ENCODE measurements at regions of chr22 and their contacts with region 1.

Region 1: DNA sequence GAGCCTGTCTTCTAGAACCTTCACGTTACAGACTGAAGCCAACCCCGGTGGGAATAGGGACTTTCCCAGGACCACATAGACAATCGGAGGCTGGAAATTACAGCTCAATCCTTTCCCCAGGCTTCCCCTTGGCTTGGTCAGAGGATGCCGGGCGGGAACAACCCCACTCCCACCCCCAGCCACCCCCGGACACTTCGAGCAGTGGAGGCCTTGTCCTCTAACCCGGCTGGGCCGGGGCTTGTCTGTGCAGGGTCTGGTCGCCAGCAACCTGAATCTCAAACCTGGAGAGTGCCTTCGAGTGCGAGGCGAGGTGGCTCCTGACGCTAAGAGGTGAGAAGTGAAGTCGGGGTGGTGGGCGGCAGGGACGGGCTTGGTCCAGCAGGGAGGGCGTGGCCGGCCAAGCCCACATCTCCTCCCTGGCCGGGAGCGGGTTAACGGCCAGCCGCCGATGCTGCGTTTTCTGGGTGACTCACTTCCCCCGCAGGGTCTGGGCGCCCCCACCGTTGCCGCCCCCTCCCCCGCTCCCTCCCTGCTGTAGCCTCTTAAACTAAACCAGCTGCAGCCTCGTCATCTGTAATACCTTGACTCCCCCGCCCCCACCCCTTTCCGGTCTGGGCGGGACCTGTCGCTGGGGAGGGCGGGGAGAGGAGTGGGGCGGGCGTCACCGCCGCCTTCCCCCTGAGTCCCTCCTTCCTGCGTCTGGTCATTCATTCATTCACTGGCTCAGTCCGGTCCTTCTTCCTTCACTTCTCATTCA is 1.5 kb downstream of the LGALS1 start:
- DNase-seq: peak; percentile 98
- ATAC-seq: peak; percentile 84
- H3K4me3 Mint-ChIP-seq: peak overlapping the region; percentile 77
- H3K27ac Mint-ChIP-seq: peak overlapping the region; percentile 93
- H3K4me1 Mint-ChIP-seq: peaks cover 70% of the 10 kb centered on the region
- H3K27me3 Mint-ChIP-seq: no peaks in the 10 kb centered on the region
- CTCF ChIP-seq: no peak

Region 2: DNA sequence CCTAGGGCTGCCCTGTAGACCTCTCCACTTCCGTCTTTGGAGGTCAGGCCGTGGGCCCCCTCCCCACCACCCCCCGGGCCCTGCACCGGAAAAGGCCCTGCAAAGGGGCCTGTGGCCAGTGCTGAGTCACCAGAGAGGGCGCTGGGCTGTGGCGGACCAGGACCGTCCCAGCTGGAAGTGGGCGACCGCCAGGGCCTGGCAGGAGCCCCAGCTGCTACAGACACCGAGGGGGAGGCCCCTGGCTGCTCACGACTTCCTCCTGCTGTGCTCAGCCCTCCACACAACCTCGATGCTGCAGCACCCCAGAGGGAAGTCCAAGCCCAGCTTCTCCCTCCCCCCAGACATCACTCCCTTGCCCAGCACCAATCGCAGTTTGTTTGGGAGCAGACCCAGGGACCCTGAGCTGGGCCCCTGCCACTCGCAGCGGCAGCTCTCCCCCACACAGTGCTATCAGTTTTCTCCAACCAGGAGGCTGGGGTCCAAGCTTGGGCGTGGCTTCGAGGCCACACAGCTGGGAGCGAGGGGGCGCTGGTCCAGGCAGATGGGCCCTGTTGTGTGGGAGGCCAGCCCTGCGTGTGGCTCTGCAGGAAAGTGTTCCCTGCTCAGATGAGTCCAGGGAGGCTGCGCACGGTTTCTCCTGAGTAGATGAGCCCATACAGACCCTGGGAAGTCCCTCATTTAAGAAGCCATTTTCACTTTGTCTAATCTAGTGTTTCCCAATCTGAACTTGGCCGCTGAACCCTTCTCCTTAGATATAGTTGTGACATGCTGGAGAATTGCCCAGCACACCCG is 43.1 kb before region 1 on chr22:
- CTCF ChIA-PET with region 1: interaction called, 1,770 read pairs
- POLR2A ChIA-PET with region 1: interaction called, 10 read pairs
- intact Hi-C with region 1: loop called (anchors 5 kb)
- DNase-seq: peak; percentile 90
- ATAC-seq: peak; percentile 66
- H3K4me3 Mint-ChIP-seq: peak overlapping the region; percentile 69
- H3K27ac Mint-ChIP-seq: peak overlapping the region; percentile 88
- H3K4me1 Mint-ChIP-seq: peaks cover 79% of the 10 kb centered on the region
- H3K27me3 Mint-ChIP-seq: no peaks in the 10 kb centered on the region
- CTCF ChIP-seq: peak; percentile 20

Region 3: GRCh38 chr22:37643225-37643847 is 33.6 kb before region 1 on chr22:
- CTCF ChIA-PET with region 1: interaction called, 1,770 read pairs
- POLR2A ChIA-PET with region 1: interaction called, 15 read pairs
- intact Hi-C with region 1: loop called (anchors 5 kb)
- DNase-seq: peak; percentile 94
- ATAC-seq: peak; percentile 75
- H3K4me3 Mint-ChIP-seq: no peak overlapping the region
- H3K27ac Mint-ChIP-seq: peak overlapping the region; percentile 79
- H3K4me1 Mint-ChIP-seq: peaks cover 33% of the 10 kb centered on the region
- H3K27me3 Mint-ChIP-seq: no peaks in the 10 kb centered on the region
- CTCF ChIP-seq: peak; percentile 86

Region 4: DNA sequence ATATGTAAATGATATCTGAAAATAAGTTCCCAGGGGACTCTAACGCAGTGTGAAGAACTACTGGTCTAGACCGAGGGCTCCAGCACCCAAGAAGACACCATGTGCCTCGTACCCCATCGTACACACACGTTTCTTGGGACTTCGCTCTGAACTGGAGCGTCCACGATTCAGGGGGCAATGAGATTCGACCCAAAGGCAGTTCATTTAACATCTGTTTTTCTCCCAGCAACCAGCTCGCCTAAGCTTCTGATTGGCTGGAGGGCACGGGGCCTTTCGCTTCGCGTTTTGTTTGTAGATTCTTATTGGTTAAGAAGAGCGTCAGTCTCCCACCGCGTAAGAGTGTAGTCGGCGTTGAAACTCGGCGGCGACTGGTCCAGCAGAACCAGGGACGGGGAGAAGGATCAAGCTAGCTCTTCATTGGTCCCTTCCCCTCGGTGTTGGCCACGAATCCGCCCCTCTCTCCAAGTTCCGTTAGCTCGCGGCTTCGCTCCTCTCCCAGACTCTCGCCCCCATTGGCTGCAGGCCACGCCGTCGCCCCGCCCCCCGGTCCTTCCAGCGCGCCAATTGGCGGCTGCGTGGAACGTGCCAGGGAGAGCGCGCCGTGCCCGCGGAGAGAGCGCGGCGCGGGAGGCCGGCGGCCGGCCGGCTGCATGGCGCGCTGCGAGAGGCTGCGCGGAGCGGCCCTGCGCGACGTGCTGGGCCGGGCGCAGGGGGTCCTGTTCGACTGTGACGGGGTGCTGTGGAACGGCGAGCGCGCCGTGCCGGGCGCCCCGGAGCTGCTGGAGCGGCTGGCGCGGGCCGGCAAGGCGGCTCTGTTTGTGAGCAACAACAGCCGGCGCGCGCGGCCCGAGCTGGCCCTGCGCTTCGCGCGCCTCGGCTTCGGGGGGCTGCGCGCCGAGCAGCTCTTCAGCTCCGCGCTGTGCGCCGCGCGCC is 18.5 kb before region 1 on chr22 and contains the start of gene PDXP:
- CTCF ChIA-PET with region 1: interaction called, 74 read pairs
- POLR2A ChIA-PET with region 1: interaction called, 49 read pairs
- intact Hi-C with region 1: loop called (anchors 2 kb)
- DNase-seq: peak; percentile 98
- ATAC-seq: peak; percentile 97
- H3K4me3 Mint-ChIP-seq: peak within 1 kb of the TSS; percentile 89
- H3K27ac Mint-ChIP-seq: peak within 1 kb of the TSS; percentile 95
- H3K4me1 Mint-ChIP-seq: peaks cover 39% of the 10 kb centered on the region
- H3K27me3 Mint-ChIP-seq: no peaks in the 10 kb centered on the region
- CTCF ChIP-seq: no peak
- total RNA-seq, gene PDXP: 51.3 to 51.5 TPM

Region 5: DNA sequence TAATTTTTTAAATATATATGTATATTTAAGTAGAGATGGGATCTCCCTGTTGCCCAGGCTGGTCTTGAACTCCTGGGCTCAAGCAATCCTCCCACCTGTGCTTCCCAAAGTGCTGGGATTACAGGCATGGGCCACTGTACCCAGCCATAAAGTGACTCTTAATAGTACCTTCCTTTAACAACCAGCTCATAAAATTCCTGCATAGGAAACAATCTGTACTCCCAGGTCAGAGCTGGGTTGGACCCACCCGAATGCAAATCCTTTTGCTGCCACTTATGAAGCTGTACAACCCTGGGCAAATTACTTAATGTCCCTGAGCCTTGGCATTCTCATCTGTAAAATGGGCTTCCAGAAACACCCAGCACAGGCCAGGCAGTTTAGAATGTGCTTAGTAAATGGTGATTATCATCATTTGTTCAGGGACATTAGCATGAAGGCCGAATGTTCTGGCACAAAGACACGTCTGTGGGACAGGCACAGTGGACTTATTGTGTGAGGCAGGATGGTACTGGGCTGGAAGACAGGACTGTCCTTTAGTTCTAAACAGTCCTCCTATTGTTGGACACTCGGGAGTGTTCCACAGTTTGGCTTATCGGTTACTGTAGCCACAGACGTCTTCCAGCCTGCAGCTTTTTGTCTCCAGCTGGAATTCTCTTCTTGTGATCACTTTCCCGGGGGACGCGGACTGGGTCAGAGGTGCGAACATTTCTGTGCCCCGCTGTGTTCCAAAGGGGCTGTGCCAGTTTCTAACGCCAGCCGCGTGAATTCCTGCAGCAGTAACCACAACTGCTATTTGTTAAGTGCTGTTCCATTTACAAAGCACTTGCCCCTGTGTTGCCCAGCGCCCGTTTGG is 12.4 kb before region 1 on chr22:
- CTCF ChIA-PET with region 1: interaction called, 74 read pairs
- POLR2A ChIA-PET with region 1: interaction called, 49 read pairs
- intact Hi-C with region 1: loop called (anchors 2 kb)
- DNase-seq: no peak
- ATAC-seq: no peak
- H3K4me3 Mint-ChIP-seq: no peak overlapping the region
- H3K27ac Mint-ChIP-seq: no peak overlapping the region
- H3K4me1 Mint-ChIP-seq: peaks cover 30% of the 10 kb centered on the region
- H3K27me3 Mint-ChIP-seq: no peaks in the 10 kb centered on the region
- CTCF ChIP-seq: no peak

Region 6: GRCh38 chr22:37696657-37697537 is 20.0 kb after region 1 on chr22 and contains the start of gene TRIOBP:
- CTCF ChIA-PET with region 1: interaction called, 11 read pairs
- POLR2A ChIA-PET with region 1: no interaction called
- intact Hi-C with region 1: no loop called
- DNase-seq: peak; percentile 98
- ATAC-seq: peak; percentile 99
- H3K4me3 Mint-ChIP-seq: peak within 1 kb of the TSS; percentile 65
- H3K27ac Mint-ChIP-seq: peak within 1 kb of the TSS; percentile 24
- H3K4me1 Mint-ChIP-seq: peaks cover 14% of the 10 kb centered on the region
- H3K27me3 Mint-ChIP-seq: no peaks in the 10 kb centered on the region
- CTCF ChIP-seq: peak; percentile 46
- total RNA-seq, gene TRIOBP: 17.8 to 20.7 TPM